Dorsolateral prefrontal cortex (tissue), 120 donors: ENCODE measurements at regions of chr12 and their contacts with region 1.

Region 1: GRCh38 chr12:125065021-125065795 is at the start of gene AACS:
- DNase-seq: peak; percentile 62 to 86 (median 78)
- H3K4me3 ChIP-seq: peak within 1 kb of the TSS; percentile 61 to 97 (median 85)
- H3K27ac ChIP-seq: peak within 1 kb of the TSS in 54 of 59 donors; percentile 15 to 90 (median 70)
- H3K27me3 ChIP-seq: no peaks in the 10 kb centered on the region
- CTCF ChIP-seq: peak in 31 of 56 donors; percentile 6 to 50 (median 26)
- total RNA-seq, gene AACS: 33.4 to 125 (median 80.9) TPM

Region 2: GRCh38 chr12:124893792-124894516 is 171.3 kb before region 1 on chr12:
- intact Hi-C with region 1: no loop called
- DNase-seq: no peak
- H3K4me3 ChIP-seq: no peak overlapping the region
- H3K27ac ChIP-seq: no peak overlapping the region
- H3K27me3 ChIP-seq: no peaks in the 10 kb centered on the region
- CTCF ChIP-seq: no peak

Region 3: DNA sequence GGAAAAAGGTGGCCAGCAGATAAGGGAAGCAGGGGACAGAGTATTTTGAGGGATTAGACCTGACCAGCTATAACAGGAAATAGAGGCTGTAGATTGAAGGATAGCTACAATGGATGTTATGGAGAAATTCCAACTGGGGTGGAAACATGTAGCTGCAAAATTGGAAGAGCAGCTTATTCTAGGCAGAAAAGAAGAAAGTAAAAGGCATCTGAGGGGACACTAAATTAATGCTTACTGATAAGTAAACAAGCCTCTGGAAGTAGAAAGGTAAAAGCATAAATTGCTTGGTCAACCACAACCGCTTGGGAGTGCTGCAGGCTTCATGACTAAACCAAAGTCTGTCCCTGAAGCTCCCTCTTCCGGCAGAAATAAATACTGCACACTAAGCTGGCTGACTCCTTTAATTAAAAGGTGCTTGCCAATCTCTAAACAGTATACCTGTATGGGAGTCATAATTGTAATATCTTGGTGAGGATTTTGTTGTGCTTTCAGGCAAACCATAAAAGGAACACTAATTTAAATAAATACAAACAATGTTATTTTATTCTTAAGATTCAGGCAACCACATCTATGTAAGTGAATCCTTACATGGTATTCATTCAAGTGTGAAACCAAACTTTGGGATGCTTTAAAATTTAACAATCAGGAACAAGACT is 158.5 kb before region 1 on chr12:
- intact Hi-C with region 1: loop called (anchors 2 to 10 kb)
- DNase-seq: peak; percentile 46 to 97 (median 85)
- H3K4me3 ChIP-seq: peak overlapping the region in 1 of 59 donors; percentile 15
- H3K27ac ChIP-seq: peak overlapping the region in 54 of 59 donors; percentile 1 to 85 (median 72)
- H3K27me3 ChIP-seq: no peaks in the 10 kb centered on the region
- CTCF ChIP-seq: peak; percentile 96 to 100 (median 99)

Region 4: DNA sequence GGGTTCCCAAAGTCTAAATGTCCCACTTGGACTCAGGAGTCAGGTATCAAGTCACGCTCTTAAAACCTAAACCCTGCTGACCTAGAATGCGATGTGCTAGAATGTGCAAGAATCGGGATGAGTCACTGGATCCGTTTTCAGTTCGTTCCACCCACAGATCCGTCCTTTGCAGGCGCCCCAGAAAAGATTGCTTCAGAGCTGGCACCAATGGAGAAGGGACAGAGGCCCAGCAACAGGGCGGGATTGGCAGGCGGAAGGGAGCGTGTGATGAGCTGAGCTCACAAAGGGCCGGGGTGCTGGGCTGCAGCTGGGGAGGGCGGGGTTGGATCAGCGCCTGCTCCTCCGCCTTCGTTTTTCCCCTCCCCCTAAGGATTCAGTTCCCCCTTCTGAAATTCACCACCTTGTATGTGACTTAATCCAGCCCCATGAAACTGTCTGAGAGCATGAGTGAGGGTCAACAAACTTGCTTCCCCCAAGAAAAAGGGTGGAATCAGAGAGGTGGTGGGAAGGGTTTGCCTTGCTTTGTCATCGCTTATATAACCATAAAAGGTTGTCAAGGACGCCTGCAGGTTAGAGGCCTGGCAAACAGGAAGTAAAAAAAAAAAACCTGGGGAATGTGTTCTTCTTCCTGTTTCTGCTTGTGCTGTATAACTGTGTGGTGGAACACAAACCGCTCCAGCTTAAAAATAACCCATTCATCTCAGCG is 147.9 kb before region 1 on chr12:
- intact Hi-C with region 1: loop called in 1 of 2 experiments (anchors 10 kb)
- DNase-seq: peak; percentile 92 to 99 (median 97)
- H3K4me3 ChIP-seq: peak overlapping the region in 58 of 59 donors; percentile 2 to 99 (median 90)
- H3K27ac ChIP-seq: peak overlapping the region; percentile 97 to 100 (median 100)
- H3K27me3 ChIP-seq: no peaks in the 10 kb centered on the region
- CTCF ChIP-seq: peak in 5 of 56 donors; percentile 9 to 28 (median 10)

Region 5: DNA sequence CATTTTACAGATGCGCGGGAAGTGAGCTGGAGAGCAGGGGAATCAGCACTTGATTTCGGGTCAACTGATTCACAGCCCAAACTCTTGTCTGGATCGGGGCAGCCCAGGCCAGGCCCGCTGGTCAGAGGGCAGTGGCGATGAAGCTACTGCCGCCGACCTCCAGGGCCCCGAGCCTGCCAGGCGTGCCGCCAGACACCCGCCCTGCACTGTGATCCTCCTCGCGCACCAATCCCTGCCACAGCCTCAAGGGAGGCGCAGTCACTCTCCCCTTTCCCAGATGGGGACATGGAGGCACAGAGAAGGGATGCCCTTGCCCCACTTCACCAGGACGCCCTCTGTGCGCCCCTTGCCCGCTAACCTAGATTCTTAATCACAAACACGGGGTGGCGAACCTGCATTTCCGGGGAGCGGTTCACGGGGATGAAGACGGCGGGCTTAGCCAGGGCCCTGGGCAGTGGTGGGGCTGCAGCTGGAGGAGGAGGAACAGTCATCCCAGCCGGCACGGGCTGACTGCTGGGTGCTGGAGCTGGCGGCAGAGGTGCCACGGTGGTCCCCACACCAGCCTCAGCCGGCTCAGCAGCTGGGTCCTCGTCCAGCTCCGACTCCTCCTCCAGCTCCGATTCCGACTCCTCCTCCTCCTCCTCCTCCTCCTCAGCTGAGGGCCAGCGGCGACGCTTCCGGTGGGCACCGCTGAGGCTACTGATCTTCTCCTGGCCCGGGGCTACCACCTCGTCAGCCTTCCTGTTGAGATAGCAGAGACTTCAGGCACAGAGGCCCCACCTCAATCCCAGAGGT is 84.9 kb before region 1 on chr12:
- intact Hi-C with region 1: loop called in 1 of 2 experiments (anchors 5 kb)
- DNase-seq: no peak
- H3K4me3 ChIP-seq: no peak overlapping the region
- H3K27ac ChIP-seq: peak overlapping the region in 1 of 59 donors; percentile 13
- H3K27me3 ChIP-seq: no peaks in the 10 kb centered on the region
- CTCF ChIP-seq: no peak

Region 6: GRCh38 chr12:124992874-124993625 is 72.2 kb before region 1 on chr12:
- intact Hi-C with region 1: loop called in 1 of 2 experiments (anchors 5 kb)
- DNase-seq: peak in 4 of 10 donors; percentile 15 to 80 (median 45)
- H3K4me3 ChIP-seq: peak overlapping the region; percentile 32 to 82 (median 66)
- H3K27ac ChIP-seq: peak overlapping the region in 37 of 59 donors; percentile 4 to 75 (median 48)
- H3K27me3 ChIP-seq: no peaks in the 10 kb centered on the region
- CTCF ChIP-seq: peak in 5 of 56 donors; percentile 6 to 32 (median 12)

Region 7: DNA sequence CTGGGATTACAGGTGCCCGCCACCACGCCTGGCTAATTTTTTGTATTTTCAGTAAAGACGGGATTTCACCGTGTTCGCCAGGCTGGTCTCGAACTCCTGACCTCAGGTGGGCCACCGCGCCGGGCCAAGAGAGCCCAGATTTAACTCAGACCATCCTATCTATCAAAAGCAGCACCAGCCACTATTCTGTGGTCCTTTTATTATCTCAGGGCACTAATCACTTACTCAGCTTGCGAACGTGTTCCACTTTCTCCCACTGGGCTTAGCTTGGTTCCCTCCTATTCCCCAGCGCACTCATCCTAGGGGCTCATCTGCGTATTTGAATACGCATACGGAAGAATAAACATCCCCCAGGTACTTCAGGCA is 16.1 kb before region 1 on chr12:
- intact Hi-C with region 1: loop called (anchors 2 kb)
- DNase-seq: no peak
- H3K4me3 ChIP-seq: peak overlapping the region; percentile 43 to 91 (median 75)
- H3K27ac ChIP-seq: peak overlapping the region in 53 of 59 donors; percentile 12 to 93 (median 76)
- H3K27me3 ChIP-seq: no peaks in the 10 kb centered on the region
- CTCF ChIP-seq: no peak

Region 8: DNA sequence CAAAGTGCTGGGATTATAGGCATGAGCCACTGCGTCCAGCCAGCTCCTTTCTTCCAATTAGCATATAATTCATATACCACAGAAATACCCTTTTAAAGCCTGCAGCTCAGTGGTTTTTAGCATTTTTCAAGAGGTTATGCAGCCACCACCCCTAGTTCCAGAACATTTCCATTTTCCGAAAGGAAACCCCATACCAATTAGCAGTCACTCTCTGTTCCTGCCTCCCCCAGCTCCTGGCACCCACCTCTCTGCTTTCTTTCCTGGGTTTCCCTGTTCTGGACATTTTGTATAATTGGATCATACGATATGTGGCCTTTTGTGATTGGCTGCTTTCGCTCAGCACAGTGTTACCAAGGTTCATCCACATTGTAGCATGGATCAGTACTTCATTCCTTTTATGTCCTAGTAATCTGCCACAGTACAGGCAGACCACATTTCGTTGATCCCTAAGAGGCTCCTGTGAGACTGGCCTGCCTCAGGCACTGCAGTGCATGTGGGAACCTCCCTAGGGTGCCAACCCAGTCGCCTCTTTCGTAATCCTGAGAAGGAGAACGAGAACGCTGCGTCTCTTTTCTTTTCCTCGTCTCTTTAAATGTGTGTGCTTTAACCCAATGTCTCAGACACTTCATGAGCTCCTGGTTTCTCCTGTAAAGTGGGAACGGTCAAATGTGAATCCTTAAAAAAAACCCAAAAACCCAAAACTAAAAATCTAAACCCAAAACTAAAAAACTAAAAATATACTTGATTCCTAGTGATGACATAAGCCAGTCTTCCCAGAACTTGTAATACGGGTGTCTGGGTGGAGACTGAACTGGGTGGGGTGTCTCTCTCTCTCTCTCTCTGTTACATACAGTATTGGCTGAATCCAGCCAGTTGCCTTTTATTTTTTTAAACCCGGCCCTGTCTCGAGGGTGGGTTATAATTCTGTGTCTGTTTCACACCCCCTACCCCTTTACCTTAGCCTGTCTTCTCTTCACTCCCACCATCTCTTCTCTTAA is 14.7 kb after region 1 on chr12:
- intact Hi-C with region 1: no loop called
- DNase-seq: peak in 2 of 10 donors; percentile 46 to 59
- H3K4me3 ChIP-seq: no peak overlapping the region
- H3K27ac ChIP-seq: peak overlapping the region in 43 of 59 donors; percentile 4 to 77 (median 53)
- H3K27me3 ChIP-seq: no peaks in the 10 kb centered on the region
- CTCF ChIP-seq: no peak

Region 9: DNA sequence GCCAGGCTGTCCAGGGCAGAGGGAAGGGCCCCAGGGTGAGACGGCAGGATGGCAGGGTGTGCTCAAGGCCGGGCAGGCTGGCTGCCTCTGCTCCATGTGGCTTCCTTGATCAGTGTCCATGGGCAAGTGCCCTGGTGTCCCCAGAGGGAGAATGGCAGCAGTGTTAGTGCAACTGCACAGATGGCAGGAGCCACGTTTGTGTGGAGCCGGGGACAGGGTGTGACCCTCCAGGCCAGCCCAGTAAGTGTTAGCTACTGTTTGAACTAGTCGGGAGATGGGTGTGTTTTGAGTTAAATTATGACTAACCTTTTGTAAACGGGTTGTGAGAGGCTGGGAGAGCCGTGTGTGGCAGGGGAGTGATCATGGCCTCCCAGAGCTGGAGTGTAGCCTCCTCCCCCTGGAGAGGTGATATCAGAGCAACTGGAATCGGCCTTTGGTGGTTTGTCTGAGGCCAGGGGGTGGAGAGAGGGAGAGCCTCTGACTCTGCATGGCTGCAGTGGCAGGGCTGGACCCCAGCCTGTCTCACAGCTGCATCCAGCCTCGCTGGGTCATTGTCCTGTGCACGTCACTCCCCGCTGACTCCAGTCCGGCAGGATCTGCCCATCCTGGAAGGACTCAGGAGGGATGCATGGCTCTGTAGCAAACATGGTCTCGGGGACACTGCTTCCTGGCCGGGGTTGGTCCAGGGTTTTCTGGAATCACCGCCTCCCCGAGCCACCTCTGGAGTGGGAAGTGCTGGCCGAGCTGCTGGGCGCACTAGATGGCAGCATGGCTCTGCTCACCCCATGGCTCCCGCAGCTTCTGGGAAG is 27.9 kb after region 1 on chr12:
- intact Hi-C with region 1: no loop called
- DNase-seq: peak in 6 of 10 donors; percentile 39 to 70 (median 58)
- H3K4me3 ChIP-seq: peak overlapping the region in 25 of 59 donors; percentile 4 to 51 (median 21)
- H3K27ac ChIP-seq: peak overlapping the region in 57 of 59 donors; percentile 5 to 91 (median 72)
- H3K27me3 ChIP-seq: no peaks in the 10 kb centered on the region
- CTCF ChIP-seq: peak in 44 of 56 donors; percentile 14 to 65 (median 38)

Region 10: DNA sequence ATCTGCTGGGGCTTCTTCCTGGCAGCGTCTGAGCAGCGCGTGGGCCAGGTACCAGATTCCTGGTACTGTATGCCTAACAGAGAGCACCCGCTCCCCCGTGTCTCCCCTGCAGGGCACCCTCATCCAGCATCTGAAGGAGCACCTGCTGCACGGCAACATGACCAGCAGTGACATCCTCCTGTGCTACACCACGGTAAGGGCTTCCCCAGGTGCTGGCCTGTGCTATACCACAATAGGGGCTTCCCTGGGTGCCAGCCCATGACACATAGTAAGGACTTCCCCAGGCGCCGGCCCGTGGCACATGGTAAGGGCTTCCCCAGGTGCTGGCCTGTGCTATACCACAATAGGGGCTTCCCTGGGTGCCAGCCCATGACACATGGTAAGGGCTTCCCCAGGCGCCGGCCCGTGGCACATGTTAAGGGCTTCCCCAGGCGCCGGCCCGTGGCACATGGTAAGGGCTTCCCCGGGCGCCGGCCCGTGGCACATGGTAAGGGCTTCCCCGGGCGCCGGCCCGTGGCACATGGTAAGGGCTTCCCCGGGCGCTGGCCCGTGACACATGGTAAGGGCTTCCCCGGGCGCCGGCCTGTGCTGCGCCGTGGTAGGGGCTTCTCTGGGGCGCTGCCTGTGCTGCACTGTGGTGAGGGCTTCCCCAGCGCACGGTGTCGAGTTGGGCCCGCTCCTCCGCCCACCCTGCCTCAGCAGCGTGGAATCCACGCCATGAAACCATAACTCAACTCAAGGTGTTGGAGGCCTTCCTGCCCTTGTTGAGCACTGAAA is 49.3 kb after region 1 on chr12:
- intact Hi-C with region 1: no loop called
- DNase-seq: no peak
- H3K4me3 ChIP-seq: no peak overlapping the region
- H3K27ac ChIP-seq: no peak overlapping the region
- H3K27me3 ChIP-seq: no peaks in the 10 kb centered on the region
- CTCF ChIP-seq: no peak